Activated CD4-positive, alpha-beta T cell treated with anti-CD3 and anti-CD28 coated beads for 36 hours (primary cell): ENCODE measurements at regions of chr3 and their contacts with region 1.

Region 1: DNA sequence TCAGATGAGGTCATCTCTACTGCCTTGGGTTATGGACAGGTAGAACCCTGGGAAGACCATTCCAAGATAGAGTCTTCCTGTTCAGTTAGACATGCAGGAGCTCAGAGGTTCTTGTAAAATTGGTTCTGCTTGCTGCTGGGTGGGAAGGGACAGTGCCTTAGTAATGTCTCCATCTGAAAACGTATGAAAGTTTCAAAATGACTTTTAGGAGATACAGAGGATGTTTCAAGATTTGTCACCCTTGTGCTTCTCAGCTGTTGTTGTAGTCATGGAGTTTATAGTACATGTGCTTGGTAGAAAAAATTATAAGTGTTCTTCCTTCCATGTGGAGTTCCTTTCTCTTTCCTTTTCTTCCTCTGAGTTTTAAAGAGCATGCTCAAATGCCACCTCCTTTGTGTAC is 885.2 kb upstream of the CFAP20DC start:
- DNase-seq: peak; percentile 38
- ATAC-seq: peak; percentile 96
- H3K4me3 Mint-ChIP-seq: peak overlapping the region; percentile 37
- H3K27ac Mint-ChIP-seq: peak overlapping the region; percentile 79
- H3K4me1 Mint-ChIP-seq: peaks cover 81% of the 10 kb centered on the region
- H3K27me3 Mint-ChIP-seq: no peaks in the 10 kb centered on the region

Region 2: DNA sequence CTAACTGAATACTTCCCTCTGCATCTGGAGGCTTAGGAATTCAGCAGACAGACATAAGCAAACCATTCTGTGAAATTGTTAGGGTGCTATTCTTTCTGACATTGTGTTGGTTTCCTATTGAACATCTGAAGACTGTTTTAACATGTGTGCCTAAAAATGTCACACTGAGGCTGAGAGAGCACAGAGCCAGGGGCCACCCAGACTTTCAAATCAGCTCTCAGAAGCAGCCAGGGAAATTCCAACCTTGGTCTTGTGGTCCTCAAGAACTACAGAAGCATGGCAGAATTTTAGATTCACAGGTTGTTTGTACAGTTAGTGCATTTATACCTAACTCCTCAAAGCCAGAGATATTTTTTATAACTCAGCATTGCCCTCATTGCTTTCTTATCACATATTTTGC is 44.0 kb after region 1 on chr3:
- CTCF ChIA-PET with region 1: no interaction called
- POLR2A ChIA-PET with region 1: no interaction called
- intact Hi-C with region 1: loop called in 1 of 2 experiments (anchors 1 kb)
- DNase-seq: peak; percentile 55
- ATAC-seq: peak; percentile 75
- H3K4me3 Mint-ChIP-seq: peak overlapping the region; percentile 21
- H3K27ac Mint-ChIP-seq: peak overlapping the region; percentile 89
- H3K4me1 Mint-ChIP-seq: peaks cover 55% of the 10 kb centered on the region
- H3K27me3 Mint-ChIP-seq: no peaks in the 10 kb centered on the region

Region 3: DNA sequence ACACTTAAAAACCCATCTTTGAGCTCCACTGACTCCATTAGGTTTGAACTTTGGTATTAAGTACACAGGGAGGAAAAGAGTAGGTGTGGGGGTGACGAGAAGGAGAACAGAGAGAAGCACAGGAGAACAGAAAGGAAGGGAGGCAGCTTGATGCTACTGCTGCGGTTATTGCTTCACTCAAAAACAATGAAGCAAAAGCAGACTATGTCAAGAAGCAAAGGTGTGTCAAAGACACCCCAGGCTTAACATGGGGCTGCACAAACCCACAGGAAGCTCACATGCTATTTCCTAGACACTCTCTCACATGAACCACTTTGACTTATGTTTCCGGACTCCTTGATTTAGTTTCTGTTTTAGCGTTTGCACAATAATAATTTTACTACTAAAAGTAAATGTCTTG is 75.8 kb after region 1 on chr3:
- CTCF ChIA-PET with region 1: interaction called, 3 read pairs
- POLR2A ChIA-PET with region 1: no interaction called
- intact Hi-C with region 1: loop called in 1 of 2 experiments (anchors 2 kb)
- DNase-seq: peak; percentile 75
- ATAC-seq: peak; percentile 97
- H3K4me3 Mint-ChIP-seq: peak overlapping the region; percentile 62
- H3K27ac Mint-ChIP-seq: peak overlapping the region; percentile 92
- H3K4me1 Mint-ChIP-seq: peaks cover 90% of the 10 kb centered on the region
- H3K27me3 Mint-ChIP-seq: no peaks in the 10 kb centered on the region